IMR-90 (cell line): ENCODE measurements at regions of chr9 and their contacts with region 1.

Region 1: GRCh38 chr9:70602321-70603019 is 188.0 kb upstream of the KLF9 start:
- DNase-seq: peak; percentile 91
- ATAC-seq: peak; percentile 60
- H3K4me3 ChIP-seq: no peak overlapping the region
- H3K27ac ChIP-seq: peak overlapping the region; percentile 79
- H3K4me1 ChIP-seq: peaks cover 17% of the 10 kb centered on the region
- H3K27me3 ChIP-seq: no peaks in the 10 kb centered on the region
- CTCF ChIP-seq: peak; percentile 91
- POLR2A ChIP-seq: peak; percentile 62; the same call in 1 of the 2 replicates
- RAD21 ChIP-seq: peak; percentile 96

Region 2: GRCh38 chr9:69945671-69946141 is 656.8 kb before region 1 on chr9:
- CTCF ChIA-PET with region 1: no interaction called
- POLR2A ChIA-PET with region 1: no interaction called
- dilution Hi-C with region 1: no loop called
- in situ Hi-C with region 1: loop called (anchors 25 kb)
- intact Hi-C with region 1: loop called (anchors 10 kb)
- DNase-seq: peak; percentile 85
- ATAC-seq: peak; percentile 65
- H3K4me3 ChIP-seq: no peak overlapping the region
- H3K27ac ChIP-seq: peak overlapping the region; percentile 88
- H3K4me1 ChIP-seq: peaks cover 15% of the 10 kb centered on the region
- H3K27me3 ChIP-seq: no peaks in the 10 kb centered on the region
- CTCF ChIP-seq: no peak
- POLR2A ChIP-seq: no peak
- RAD21 ChIP-seq: no peak

Region 3: DNA sequence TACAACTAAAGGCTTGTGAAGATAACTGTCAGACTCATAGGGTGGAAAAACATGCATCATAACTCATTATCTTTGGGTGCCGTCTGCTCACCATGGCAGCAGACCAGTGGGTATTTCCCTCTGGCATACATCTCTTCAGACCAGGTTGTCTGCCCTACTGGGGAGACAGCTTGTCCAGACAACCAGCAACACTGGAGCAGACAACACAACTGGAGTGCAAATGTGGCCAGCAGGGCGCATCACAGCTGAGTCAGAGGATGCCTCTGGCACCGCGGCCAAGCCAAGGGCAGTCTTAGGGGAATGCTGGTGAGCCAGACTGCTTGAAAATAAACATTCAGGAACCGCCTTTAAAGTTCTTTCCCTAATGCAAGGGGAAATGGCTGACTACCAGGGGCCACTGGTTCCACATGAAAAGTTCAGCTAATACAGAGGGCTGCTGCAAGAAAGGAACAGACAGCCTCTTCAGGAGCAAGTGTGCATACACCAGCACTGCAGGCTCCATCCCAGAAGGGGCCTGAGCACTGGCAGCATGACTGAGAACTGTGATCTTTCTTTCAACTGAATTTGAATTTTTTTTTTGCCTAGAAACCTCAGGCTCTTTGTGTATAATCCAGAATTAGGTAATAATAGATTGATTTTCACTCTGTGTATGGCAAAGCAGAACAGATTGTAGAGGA is 481.5 kb before region 1 on chr9:
- CTCF ChIA-PET with region 1: interaction called, 5 read pairs
- POLR2A ChIA-PET with region 1: no interaction called
- dilution Hi-C with region 1: no loop called
- in situ Hi-C with region 1: loop called (anchors 10 kb)
- intact Hi-C with region 1: loop called (anchors 1 kb)
- DNase-seq: peak; percentile 97
- ATAC-seq: peak; percentile 95
- H3K4me3 ChIP-seq: no peak overlapping the region
- H3K27ac ChIP-seq: peak overlapping the region; percentile 54
- H3K4me1 ChIP-seq: peaks cover 15% of the 10 kb centered on the region
- H3K27me3 ChIP-seq: no peaks in the 10 kb centered on the region
- CTCF ChIP-seq: peak; percentile 47
- POLR2A ChIP-seq: no peak
- RAD21 ChIP-seq: peak; percentile 47

Region 4: DNA sequence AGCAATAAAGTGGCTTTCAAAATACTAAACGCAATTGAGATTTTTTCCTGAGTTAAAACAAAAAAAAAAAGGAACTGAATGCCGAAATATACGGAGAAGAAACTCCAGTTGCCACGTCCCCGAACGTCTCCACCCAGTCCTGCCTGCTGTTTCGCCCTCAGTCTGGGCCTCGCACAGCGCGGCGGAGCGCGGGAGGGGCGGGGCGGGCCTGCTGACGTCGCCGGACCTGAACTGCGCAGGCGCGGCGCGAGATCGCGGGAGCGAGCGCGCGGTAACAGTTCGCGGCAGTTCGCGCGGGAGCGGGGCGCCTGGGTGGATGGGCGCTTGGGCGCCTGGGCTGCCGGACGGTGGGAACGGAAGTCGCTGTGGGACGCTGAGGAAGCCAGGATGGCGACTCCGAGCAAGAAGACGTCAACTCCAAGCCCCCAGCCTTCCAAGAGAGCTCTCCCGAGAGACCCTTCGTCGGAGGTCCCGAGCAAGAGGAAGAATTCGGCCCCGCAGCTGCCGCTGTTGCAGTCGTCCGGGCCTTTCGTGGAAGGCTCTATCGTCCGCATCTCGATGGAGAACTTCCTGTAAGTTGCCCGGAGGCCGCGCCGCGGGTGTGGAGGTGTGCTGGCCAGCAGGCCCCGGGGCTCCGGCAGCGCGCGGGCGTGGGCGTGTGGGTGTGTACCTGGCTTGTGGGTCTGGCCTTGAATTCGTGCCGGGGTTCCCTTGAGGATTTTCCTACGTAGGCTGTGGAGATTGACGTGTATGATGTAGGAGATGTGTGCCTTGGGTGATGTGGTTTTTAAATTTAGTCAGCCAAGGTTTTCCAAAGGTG is 343.6 kb before region 1 on chr9 and contains the start of gene SMC5:
- CTCF ChIA-PET with region 1: interaction called, 6 read pairs
- POLR2A ChIA-PET with region 1: interaction called, 3 read pairs
- dilution Hi-C with region 1: no loop called
- in situ Hi-C with region 1: no loop called
- intact Hi-C with region 1: loop called (anchors 2 kb)
- DNase-seq: peak; percentile 92
- ATAC-seq: peak; percentile 84
- H3K4me3 ChIP-seq: peak within 1 kb of the TSS; percentile 75
- H3K27ac ChIP-seq: peak within 1 kb of the TSS; percentile 97
- H3K4me1 ChIP-seq: peaks cover 26% of the 10 kb centered on the region
- H3K27me3 ChIP-seq: no peaks in the 10 kb centered on the region
- CTCF ChIP-seq: no peak
- POLR2A ChIP-seq: peak; percentile 96
- RAD21 ChIP-seq: no peak
- total RNA-seq, gene SMC5: 12.0 and 25.8 TPM in 2 replicates

Region 5: GRCh38 chr9:70347046-70347445 is 255.4 kb before region 1 on chr9:
- CTCF ChIA-PET with region 1: interaction called, 4 read pairs
- POLR2A ChIA-PET with region 1: no interaction called
- dilution Hi-C with region 1: no loop called
- in situ Hi-C with region 1: loop called (anchors 5 kb)
- intact Hi-C with region 1: no loop called
- DNase-seq: no peak
- ATAC-seq: no peak
- H3K4me3 ChIP-seq: no peak overlapping the region
- H3K27ac ChIP-seq: no peak overlapping the region
- H3K4me1 ChIP-seq: no peaks in the 10 kb centered on the region
- H3K27me3 ChIP-seq: no peaks in the 10 kb centered on the region
- CTCF ChIP-seq: no peak
- POLR2A ChIP-seq: no peak
- RAD21 ChIP-seq: no peak

Region 6: DNA sequence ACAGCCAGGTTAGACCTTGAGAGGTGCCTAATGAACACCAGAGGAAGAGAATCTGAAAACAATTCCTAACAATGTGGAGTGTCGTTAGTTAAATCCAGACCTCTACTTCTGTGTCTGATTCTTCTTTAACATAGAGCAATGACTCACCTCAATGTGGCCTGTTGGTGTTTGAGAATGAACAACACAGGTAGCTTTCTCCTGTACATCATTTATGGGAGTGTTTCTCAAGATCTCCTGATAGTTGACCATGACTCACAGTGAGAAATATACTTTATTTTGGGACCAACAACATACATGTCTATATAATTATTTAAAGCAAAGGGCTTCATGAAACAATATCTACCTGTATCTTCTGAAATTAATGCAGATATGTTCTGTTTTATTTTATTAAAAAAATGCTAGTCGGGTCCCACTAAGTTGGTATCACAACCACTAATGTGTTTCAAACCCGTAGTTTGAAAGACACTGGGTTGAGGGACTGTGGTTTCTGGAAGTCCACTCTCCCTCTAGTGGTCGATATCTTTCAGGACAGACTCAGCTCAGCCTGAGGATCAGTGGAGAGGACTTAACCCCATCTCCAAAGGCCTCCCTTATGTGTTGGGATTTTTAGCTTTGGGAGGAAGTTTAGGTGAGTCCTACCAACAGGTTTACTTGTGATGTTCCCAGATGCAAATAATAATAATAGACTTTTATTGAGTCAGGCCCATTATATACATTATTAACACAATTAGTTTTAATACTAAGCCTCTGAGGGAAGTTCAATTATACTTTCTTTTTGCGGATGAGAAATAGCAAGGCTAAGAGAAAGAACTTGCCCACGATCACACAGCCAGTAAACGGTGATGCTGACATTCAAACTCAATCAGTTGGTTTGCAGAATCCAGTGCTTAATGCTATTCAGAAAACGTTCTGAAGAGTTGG is 118.0 kb before region 1 on chr9:
- CTCF ChIA-PET with region 1: interaction called, 11 read pairs
- POLR2A ChIA-PET with region 1: no interaction called
- dilution Hi-C with region 1: no loop called
- in situ Hi-C with region 1: no loop called
- intact Hi-C with region 1: loop called (anchors 1 kb)
- DNase-seq: peak; percentile 86
- ATAC-seq: peak; percentile 69
- H3K4me3 ChIP-seq: no peak overlapping the region
- H3K27ac ChIP-seq: no peak overlapping the region
- H3K4me1 ChIP-seq: peaks cover 18% of the 10 kb centered on the region
- H3K27me3 ChIP-seq: no peaks in the 10 kb centered on the region
- CTCF ChIP-seq: peak; percentile 80
- POLR2A ChIP-seq: no peak
- RAD21 ChIP-seq: peak; percentile 78

Region 7: GRCh38 chr9:70772601-70773000 is 170.1 kb after region 1 on chr9:
- CTCF ChIA-PET with region 1: no interaction called
- POLR2A ChIA-PET with region 1: no interaction called
- dilution Hi-C with region 1: no loop called
- in situ Hi-C with region 1: no loop called
- intact Hi-C with region 1: no loop called
- DNase-seq: no peak
- ATAC-seq: no peak
- H3K4me3 ChIP-seq: no peak overlapping the region
- H3K27ac ChIP-seq: no peak overlapping the region
- H3K4me1 ChIP-seq: no peaks in the 10 kb centered on the region
- H3K27me3 ChIP-seq: no peaks in the 10 kb centered on the region
- CTCF ChIP-seq: no peak
- POLR2A ChIP-seq: no peak
- RAD21 ChIP-seq: no peak

Region 8: DNA sequence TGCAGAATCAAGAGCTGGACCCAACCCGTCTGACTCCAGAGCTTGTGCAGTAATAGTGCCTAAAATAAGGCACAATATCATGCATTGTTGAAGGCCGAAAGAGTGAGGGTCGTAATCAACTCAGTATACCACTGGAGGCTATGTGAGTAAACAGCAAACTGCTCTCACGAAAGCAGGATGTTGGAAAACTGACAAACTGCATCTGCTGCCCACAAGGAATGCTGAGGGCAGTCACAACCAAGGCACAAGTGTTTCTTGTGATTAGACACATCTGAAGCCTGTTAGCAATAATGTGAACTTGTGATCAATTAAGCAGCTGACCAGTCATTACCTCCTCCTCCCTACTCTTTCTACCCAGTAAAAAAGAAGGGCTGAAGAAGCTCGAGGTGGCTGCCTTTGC is 470.1 kb after region 1 on chr9:
- CTCF ChIA-PET with region 1: no interaction called
- POLR2A ChIA-PET with region 1: no interaction called
- dilution Hi-C with region 1: no loop called
- in situ Hi-C with region 1: no loop called
- intact Hi-C with region 1: no loop called
- DNase-seq: no peak
- ATAC-seq: no peak
- H3K4me3 ChIP-seq: no peak overlapping the region
- H3K27ac ChIP-seq: no peak overlapping the region
- H3K4me1 ChIP-seq: no peaks in the 10 kb centered on the region
- H3K27me3 ChIP-seq: no peaks in the 10 kb centered on the region
- CTCF ChIP-seq: no peak
- POLR2A ChIP-seq: no peak
- RAD21 ChIP-seq: no peak